ENCODE measurements at regions of chr16 and their contacts with region 1.

Region 1: GRCh38 chr16:68770671-68771070 is 33.6 kb downstream of the CDH1 start:
- DNase-seq: no peak
- ATAC-seq: peak; percentile 43; the same call in 1 of the 3 replicates
- H3K4me3 ChIP-seq: no peak overlapping the region
- H3K27ac ChIP-seq: no peak overlapping the region
- H3K4me1 ChIP-seq: no peaks in the 10 kb centered on the region
- H3K27me3 ChIP-seq: no peaks in the 10 kb centered on the region
- CTCF ChIP-seq: no peak
- EP300 ChIP-seq: no peak
- POLR2A ChIP-seq: no peak
- RAD21 ChIP-seq: no peak

Region 2: GRCh38 chr16:68756250-68756915 is 14.3 kb before region 1 on chr16:
- CTCF ChIA-PET with region 1: no interaction called
- POLR2A ChIA-PET with region 1: no interaction called
- in situ Hi-C with region 1: no loop called
- intact Hi-C with region 1: no loop called
- DNase-seq: no peak
- ATAC-seq: no peak
- H3K4me3 ChIP-seq: no peak overlapping the region
- H3K27ac ChIP-seq: no peak overlapping the region
- H3K4me1 ChIP-seq: peaks cover 42% of the 10 kb centered on the region
- H3K27me3 ChIP-seq: no peaks in the 10 kb centered on the region
- CTCF ChIP-seq: no peak
- EP300 ChIP-seq: no peak
- POLR2A ChIP-seq: no peak
- RAD21 ChIP-seq: no peak

Region 3: DNA sequence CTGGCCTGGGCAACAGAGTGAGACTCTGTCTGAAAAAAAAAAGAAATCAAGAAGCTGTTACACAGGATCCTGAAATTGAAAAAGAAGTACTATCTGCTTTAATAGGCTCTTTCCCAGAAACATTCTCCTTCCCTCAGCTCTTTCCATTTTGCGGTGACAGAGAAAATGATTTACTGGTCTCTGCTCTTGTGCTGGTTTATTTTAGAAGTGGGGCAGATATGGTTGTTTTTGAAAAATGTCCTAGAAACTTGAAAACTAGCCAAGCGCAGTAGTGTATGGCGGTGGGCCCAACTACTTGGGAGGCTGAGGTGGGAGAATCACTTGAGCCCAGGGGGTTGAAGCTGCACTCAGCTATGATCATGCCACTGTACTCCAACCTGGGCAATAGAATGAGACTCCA is 43.8 kb after region 1 on chr16:
- CTCF ChIA-PET with region 1: no interaction called
- POLR2A ChIA-PET with region 1: no interaction called
- in situ Hi-C with region 1: no loop called
- intact Hi-C with region 1: loop called (anchors 1 kb)
- DNase-seq: no peak
- ATAC-seq: no peak
- H3K4me3 ChIP-seq: no peak overlapping the region
- H3K27ac ChIP-seq: no peak overlapping the region
- H3K4me1 ChIP-seq: no peaks in the 10 kb centered on the region
- H3K27me3 ChIP-seq: no peaks in the 10 kb centered on the region
- CTCF ChIP-seq: no peak
- EP300 ChIP-seq: no peak
- POLR2A ChIP-seq: no peak
- RAD21 ChIP-seq: no peak

Region 4: GRCh38 chr16:68866933-68867332 is 96.3 kb after region 1 on chr16:
- CTCF ChIA-PET with region 1: no interaction called
- POLR2A ChIA-PET with region 1: no interaction called
- in situ Hi-C with region 1: no loop called
- intact Hi-C with region 1: no loop called
- DNase-seq: no peak
- ATAC-seq: no peak
- H3K4me3 ChIP-seq: no peak overlapping the region
- H3K27ac ChIP-seq: no peak overlapping the region
- H3K4me1 ChIP-seq: peaks cover 5% of the 10 kb centered on the region; the same call in 1 of the 2 replicates
- H3K27me3 ChIP-seq: no peaks in the 10 kb centered on the region
- CTCF ChIP-seq: no peak
- EP300 ChIP-seq: no peak
- POLR2A ChIP-seq: no peak
- RAD21 ChIP-seq: no peak

Measured in HepG2 (cell line).